Uterus (tissue), 4 donors: ENCODE measurements at regions of chr20 and their contacts with region 1.

Region 1: DNA sequence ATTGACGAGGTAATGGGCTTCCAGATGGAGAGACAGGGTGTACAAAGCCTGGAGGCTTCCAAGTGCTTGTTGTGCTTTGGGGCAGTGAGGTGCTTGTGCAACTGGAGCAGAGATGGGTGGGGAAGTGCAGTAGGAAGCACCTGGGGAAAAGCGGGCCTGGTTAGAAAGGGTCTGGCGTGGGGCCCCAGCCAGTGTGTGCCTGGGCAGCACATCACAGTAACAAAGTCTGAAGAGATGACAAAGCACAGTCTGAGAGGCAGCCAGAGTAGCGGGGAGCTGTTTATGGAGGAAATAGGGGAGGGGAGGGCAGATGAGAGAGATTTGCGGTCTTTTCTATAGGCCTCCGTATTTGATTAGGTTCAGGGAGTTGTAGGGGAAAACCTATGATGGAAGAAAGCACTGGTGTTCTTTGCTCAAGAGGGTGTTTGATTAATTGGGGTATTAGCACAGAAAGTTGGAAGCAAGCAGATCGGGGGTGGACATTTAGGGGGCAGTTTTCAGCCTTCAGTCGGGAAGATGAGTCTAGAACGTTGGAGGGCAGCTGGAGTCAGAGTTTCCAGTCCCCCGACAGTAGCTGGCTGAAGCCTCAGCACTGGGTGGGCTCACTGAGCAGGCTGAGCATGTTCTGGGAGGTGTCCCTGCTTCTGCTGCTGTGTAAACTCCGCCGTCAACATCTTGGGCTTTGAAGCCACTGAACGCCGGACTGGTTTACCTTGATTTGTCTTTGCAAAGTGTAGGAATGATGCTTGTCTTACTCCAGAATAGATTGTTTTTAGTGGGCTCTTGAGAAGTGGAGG is 15.5 kb upstream of the MROH8 start:
- DNase-seq: no peak
- H3K4me3 ChIP-seq: no peak overlapping the region
- H3K27ac ChIP-seq: no peak overlapping the region
- H3K4me1 ChIP-seq: peaks cover 0 to 6% of the 10 kb centered on the region in 2 donors
- H3K27me3 ChIP-seq: no peaks in the 10 kb centered on the region
- CTCF ChIP-seq: no peak
- POLR2A ChIP-seq: no peak

Region 2: DNA sequence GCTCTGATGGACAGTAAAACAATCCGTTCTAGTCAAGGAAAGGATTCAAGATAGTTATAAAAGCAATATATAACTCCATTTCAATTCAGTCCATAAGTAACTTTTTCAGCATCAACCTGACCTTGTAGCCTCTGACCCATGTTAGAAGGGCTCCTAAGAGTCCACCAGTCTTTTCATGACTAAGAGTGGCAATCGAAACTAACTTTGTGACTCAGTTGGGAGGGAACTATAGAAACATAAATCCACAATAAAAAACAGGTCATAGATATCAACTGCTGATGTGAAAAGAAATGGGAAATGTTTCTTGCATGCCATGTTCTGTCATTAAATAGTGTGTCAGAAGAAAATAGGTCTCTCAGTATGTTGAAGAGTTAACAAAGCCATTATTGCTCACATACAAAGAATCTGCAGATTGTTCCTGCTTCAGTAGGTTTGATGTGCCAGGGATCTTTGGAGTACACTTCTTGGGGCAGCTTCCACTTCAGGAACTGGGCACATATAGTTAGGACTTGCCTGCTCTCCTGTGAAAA is 82.8 kb before region 1 on chr20:
- intact Hi-C with region 1: no loop called
- DNase-seq: no peak
- H3K4me3 ChIP-seq: no peak overlapping the region
- H3K27ac ChIP-seq: no peak overlapping the region
- H3K4me1 ChIP-seq: no peaks in the 10 kb centered on the region
- H3K27me3 ChIP-seq: no peaks in the 10 kb centered on the region
- CTCF ChIP-seq: no peak
- POLR2A ChIP-seq: no peak

Region 3: DNA sequence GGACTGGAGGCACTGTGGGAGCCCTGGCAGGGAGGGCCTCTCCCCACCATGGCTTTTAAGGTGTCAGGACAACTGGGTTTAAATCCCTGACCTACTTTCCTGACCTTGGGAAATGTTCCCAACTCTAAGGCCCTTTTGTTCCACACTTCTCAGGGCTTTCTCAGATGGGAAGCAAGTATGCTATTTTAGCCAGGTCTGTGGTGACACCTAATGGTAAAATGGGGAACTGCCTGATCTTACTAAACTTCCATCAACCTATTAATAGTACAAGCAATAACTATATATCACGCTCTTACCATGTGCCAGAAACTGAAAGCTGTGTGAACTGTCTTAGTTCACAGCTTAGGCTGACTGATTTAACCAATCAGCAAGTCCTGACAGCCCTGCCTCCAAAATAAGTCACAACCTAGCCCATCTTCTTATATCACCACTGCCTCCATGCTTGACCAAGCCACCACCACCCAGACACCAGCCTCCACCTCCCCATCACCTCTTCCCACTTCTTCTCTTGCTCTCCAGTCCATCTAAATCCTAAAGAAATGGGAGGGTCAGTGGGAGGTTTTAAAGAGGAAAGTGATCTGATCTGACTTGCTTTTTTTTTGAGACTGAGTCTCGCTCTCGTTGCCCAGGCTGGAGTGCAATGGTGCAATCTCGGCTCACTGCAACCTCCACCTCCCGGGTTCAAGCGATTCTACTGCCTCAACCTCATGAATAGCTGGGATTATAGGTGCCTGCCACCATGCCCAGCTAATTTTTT is 339.8 kb after region 1 on chr20:
- intact Hi-C with region 1: loop called (anchors 5 kb)
- DNase-seq: peak in 1 of 2 donors; percentile 68
- H3K4me3 ChIP-seq: no peak overlapping the region
- H3K27ac ChIP-seq: no peak overlapping the region
- H3K4me1 ChIP-seq: no peaks in the 10 kb centered on the region
- H3K27me3 ChIP-seq: no peaks in the 10 kb centered on the region
- CTCF ChIP-seq: peak; percentile 81 to 96 (median 89)
- POLR2A ChIP-seq: no peak